Activated naive CD4-positive, alpha-beta T cell treated with anti-CD3 and anti-CD28 coated beads for 36 hours (primary cell): ENCODE measurements at regions of chr5 and their contacts with region 1.

Region 1: DNA sequence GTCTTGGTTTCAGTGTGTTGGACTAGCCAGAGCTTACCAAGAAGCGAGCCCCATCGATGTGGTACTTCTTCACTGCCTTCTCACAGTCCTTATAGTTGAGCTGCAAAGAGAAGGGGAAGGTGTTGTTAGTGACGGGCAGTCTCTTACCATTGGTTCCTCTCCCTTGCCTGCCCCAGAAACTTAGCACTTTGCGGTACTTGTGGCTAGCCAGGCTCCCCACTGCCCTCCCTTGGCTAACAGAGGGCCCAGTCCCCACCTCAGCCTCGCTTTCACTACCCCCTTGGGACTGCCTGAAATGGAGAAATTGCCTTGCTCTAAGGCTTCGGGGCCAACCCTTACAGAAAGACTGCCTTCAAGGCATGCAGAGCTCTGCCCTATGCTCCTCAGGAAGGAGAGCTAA is 4.3 kb downstream of the LCP2 start:
- DNase-seq: peak; percentile 66
- H3K4me3 Mint-ChIP-seq: peak overlapping the region; percentile 95
- H3K27ac Mint-ChIP-seq: peak overlapping the region; percentile 98
- H3K4me1 Mint-ChIP-seq: peaks cover 69% of the 10 kb centered on the region
- H3K27me3 Mint-ChIP-seq: no peaks in the 10 kb centered on the region

Region 2: DNA sequence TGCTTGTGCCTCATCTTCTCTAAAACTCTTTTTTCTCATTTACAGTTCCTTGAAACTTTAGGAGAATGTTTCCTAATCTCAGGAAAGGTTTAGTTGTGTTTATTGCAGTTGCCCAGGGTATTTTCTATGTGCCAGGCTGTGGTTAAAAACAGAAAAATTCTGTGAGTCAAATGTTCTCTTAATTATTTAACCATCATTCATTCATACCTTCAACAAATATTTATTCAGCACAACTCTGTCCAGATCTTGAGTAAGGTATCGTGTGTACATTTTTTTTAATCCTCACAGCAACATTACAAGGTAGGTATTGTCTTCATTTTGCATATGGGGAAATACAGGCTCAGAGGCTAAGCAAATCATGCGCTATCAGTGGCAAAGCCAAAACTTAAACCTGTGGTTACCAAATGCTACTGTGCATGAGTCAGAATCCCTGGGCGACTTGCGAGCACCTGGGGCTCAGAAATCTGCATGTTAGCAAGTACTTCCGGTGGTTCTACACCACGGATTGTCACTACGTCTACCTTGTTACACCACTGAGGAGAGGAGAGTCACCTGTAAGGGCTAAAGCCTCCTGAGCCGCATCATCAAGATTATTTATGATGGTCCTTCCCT is 39.3 kb before region 1 on chr5:
- CTCF ChIA-PET with region 1: interaction called, 3 read pairs
- intact Hi-C with region 1: loop called (anchors 1 kb)
- DNase-seq: peak; percentile 86
- H3K4me3 Mint-ChIP-seq: no peak overlapping the region
- H3K27ac Mint-ChIP-seq: peak overlapping the region; percentile 83
- H3K4me1 Mint-ChIP-seq: peaks cover 62% of the 10 kb centered on the region
- H3K27me3 Mint-ChIP-seq: no peaks in the 10 kb centered on the region